ENCODE measurements at regions of chr3 and their contacts with region 1.

Region 1: DNA sequence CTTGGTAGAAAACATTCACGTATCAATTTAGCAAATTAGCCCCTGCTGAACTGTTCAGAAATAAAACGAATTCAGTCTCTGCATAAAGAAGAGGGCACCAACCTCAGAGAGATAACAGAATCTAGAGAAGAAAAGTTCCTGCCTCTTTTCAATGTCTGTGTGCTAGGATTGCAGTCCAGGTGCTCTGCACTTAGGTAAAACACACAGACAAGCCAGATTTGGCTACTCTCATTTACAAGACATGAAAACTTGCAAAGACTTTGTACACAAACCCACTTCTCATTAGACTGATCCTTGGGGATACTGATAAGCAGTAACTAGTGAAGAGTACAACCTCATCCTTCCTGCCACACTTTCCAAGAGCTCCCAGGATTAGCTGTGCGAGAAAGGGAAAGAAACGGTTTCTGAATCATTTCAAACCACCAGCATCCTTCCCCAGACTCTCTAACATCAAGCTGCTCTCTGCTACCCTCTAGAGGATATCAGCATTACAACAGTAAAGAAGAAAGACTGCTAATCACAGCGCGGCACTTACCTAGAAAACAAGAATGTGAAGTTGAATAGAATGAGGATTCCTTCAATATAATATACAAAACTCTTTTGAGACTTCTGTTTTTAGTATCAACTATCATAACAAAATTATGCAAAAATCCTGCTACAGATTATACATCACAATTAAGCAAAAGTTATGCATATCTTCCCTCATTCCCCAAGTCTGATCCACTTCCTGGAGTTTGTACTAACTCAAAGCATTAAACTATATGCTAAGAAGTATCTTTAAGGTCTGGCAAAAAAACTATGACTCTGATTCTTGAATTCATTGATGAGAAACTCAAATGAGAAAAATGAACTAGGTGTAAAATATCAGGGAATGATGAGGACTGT is 306.4 kb downstream of the MAGI1 start:
- DNase-seq: peak; percentile 62
- CTCF ChIP-seq: peak; percentile 76

Region 2: GRCh38 chr3:64209866-64210621 is 1522.2 kb before region 1 on chr3:
- in situ Hi-C with region 1: no loop called
- DNase-seq: no peak
- CTCF ChIP-seq: no peak

Region 3: GRCh38 chr3:64533617-64534317 is 1198.5 kb before region 1 on chr3:
- in situ Hi-C with region 1: loop called (anchors 25 kb)
- DNase-seq: peak; percentile 65
- CTCF ChIP-seq: peak; percentile 83

Region 4: GRCh38 chr3:65473736-65474135 is 258.6 kb before region 1 on chr3:
- in situ Hi-C with region 1: no loop called
- DNase-seq: no peak
- CTCF ChIP-seq: no peak

Region 5: DNA sequence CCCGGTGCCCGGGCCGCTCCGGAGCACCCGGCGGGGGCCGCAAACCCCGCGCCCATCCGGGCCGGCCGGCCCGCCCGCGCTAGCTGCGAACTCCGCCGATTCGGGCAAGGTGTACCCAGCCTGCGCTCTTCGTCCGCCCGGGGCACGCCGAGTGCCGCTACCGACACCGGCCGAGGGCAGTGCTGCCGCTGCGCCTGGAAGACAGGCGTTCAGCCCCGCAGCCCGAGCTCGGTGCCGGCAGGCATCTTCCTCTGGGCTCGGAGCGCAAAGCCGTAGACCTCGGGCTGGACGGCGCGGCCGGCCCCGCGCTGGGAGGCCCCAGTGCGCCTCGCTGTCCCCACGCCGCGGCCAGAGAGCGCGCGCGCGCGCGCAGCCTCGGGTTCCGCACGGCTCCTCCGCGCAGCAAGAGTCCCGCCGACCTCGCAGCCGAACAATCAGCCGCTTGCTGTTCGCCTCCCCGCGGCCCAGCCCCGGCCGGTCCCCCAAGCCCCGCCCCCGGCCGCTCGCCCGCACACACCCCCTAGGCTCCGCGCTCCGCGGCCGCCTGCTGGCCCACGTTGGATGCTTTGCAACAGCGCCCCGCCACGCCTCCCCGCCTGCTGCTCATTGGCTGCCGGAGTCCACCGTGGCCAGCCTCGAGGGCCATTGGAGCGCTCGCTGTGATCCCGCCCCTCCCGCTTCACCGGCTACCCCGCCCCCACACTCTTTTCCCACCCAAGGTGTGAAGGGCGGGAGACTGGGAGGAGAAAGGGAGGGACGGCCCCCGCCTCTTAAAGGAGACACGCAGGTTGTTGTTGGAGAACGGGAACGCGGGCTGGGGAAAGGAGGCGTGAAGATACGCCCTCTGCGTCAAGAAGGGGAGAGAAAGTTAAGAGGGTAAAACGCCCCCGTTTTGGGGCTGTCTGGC is 768.5 kb after region 1 on chr3 and contains the start of gene LRIG1:
- in situ Hi-C with region 1: no loop called
- DNase-seq: peak; percentile 96
- CTCF ChIP-seq: peak; percentile 29

Measured in GM13976 (cell line).